Spleen (tissue), 13 donors: ENCODE measurements at regions of chr3 and their contacts with region 1.

Region 1: DNA sequence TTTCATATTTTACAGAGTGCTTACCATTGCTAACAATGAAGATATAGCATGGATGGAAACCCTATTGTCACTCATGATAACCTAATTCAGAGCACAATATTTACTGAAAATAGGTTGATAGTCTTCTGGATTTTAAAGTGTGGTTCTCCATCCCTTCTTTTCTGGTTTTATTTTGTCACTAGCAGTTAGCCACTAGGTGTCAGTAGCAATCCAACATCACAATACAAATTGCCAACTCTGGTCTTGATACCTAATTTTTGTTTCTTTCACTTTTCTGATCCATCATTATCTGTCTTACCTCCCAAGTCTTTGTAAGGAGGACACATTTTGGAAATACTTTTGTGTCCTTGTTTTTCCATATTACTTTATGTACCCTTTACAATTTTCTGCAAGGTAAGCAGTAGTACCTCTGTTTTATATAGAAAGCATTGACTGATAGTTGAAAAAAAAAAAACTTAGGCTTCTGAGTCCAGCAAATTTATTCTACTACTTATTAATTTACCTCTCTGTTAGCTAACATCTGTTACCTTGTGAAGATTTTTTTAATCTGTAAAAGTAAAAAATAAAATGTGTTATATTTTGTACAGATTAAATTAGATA is 28.3 kb upstream of the CRYBG3 start:
- DNase-seq: no peak
- H3K4me3 ChIP-seq: no peak overlapping the region
- H3K27ac ChIP-seq: no peak overlapping the region
- H3K4me1 ChIP-seq: peaks cover 0 to 3% (median 0%) of the 10 kb centered on the region in 6 donors
- H3K27me3 ChIP-seq: no peaks in the 10 kb centered on the region
- CTCF ChIP-seq: peak in 10 of 11 experiments; percentile 45 to 88 (median 69)
- POLR2A ChIP-seq: no peak

Region 2: GRCh38 chr3:97432914-97433313 is 360.6 kb before region 1 on chr3:
- intact Hi-C with region 1: no loop called
- DNase-seq: no peak
- H3K4me3 ChIP-seq: no peak overlapping the region
- H3K27ac ChIP-seq: no peak overlapping the region
- H3K4me1 ChIP-seq: no peaks in the 10 kb centered on the region
- H3K27me3 ChIP-seq: no peaks in the 10 kb centered on the region
- CTCF ChIP-seq: no peak
- POLR2A ChIP-seq: no peak

Region 3: GRCh38 chr3:97670952-97671351 is 122.6 kb before region 1 on chr3:
- intact Hi-C with region 1: no loop called
- DNase-seq: no peak
- H3K4me3 ChIP-seq: no peak overlapping the region
- H3K27ac ChIP-seq: no peak overlapping the region
- H3K4me1 ChIP-seq: no peaks in the 10 kb centered on the region
- H3K27me3 ChIP-seq: no peaks in the 10 kb centered on the region
- CTCF ChIP-seq: no peak
- POLR2A ChIP-seq: no peak

Region 4: GRCh38 chr3:97835761-97836160 is 42.2 kb after region 1 on chr3:
- intact Hi-C with region 1: no loop called
- DNase-seq: no peak
- H3K4me3 ChIP-seq: no peak overlapping the region
- H3K27ac ChIP-seq: no peak overlapping the region
- H3K4me1 ChIP-seq: no peaks in the 10 kb centered on the region
- H3K27me3 ChIP-seq: no peaks in the 10 kb centered on the region
- CTCF ChIP-seq: no peak
- POLR2A ChIP-seq: no peak

Region 5: GRCh38 chr3:98025392-98025945 is 231.9 kb after region 1 on chr3:
- intact Hi-C with region 1: loop called (anchors 2 kb)
- DNase-seq: no peak
- H3K4me3 ChIP-seq: no peak overlapping the region
- H3K27ac ChIP-seq: no peak overlapping the region
- H3K4me1 ChIP-seq: peaks cover 0 to 8% (median 2%) of the 10 kb centered on the region in 6 donors
- H3K27me3 ChIP-seq: peaks cover 0 to 12% (median 0%) of the 10 kb centered on the region in 7 donors
- CTCF ChIP-seq: no peak
- POLR2A ChIP-seq: no peak